Ovary (tissue), 10 donors: ENCODE measurements at regions of chr16 and their contacts with region 1.

Region 1: GRCh38 chr16:27703545-27703944 is 153.6 kb downstream of the KATNIP start:
- DNase-seq: peak in 1 of 5 donors; percentile 1
- H3K4me3 ChIP-seq: no peak overlapping the region
- H3K27ac ChIP-seq: no peak overlapping the region
- H3K4me1 ChIP-seq: no peaks in the 10 kb centered on the region
- H3K27me3 ChIP-seq: no peaks in the 10 kb centered on the region
- CTCF ChIP-seq: no peak
- EP300 ChIP-seq: no peak
- POLR2A ChIP-seq: no peak

Region 2: DNA sequence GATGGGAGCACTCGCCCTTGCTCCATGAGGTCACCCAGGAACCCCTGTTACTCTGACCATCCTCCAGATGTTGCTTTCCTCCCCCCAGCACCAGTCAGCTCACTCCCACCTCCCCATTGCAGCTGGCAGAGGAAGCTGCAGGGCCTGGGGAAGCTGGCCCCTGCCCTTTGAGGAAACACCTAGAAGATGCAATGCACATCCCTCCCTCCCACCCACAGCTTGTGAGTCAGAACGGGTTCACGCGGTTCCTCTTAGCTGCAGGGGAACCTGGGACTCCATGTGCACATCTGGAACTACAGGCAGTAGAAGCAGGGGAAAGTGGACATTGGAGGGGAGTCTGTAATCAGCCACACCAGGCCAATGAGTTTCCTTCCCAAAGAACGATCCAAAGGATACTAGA is 56.7 kb before region 1 on chr16:
- intact Hi-C with region 1: no loop called
- DNase-seq: no peak
- H3K4me3 ChIP-seq: no peak overlapping the region
- H3K27ac ChIP-seq: no peak overlapping the region
- H3K4me1 ChIP-seq: peaks cover 2% of the 10 kb centered on the region
- H3K27me3 ChIP-seq: no peaks in the 10 kb centered on the region
- CTCF ChIP-seq: no peak
- EP300 ChIP-seq: no peak
- POLR2A ChIP-seq: no peak

Region 3: GRCh38 chr16:27769561-27770255 is 66.2 kb after region 1 on chr16:
- intact Hi-C with region 1: loop called in 1 of 4 experiments (anchors 10 kb)
- DNase-seq: no peak
- H3K4me3 ChIP-seq: no peak overlapping the region
- H3K27ac ChIP-seq: no peak overlapping the region
- H3K4me1 ChIP-seq: no peaks in the 10 kb centered on the region
- H3K27me3 ChIP-seq: no peaks in the 10 kb centered on the region
- CTCF ChIP-seq: no peak
- EP300 ChIP-seq: no peak
- POLR2A ChIP-seq: no peak

Region 4: DNA sequence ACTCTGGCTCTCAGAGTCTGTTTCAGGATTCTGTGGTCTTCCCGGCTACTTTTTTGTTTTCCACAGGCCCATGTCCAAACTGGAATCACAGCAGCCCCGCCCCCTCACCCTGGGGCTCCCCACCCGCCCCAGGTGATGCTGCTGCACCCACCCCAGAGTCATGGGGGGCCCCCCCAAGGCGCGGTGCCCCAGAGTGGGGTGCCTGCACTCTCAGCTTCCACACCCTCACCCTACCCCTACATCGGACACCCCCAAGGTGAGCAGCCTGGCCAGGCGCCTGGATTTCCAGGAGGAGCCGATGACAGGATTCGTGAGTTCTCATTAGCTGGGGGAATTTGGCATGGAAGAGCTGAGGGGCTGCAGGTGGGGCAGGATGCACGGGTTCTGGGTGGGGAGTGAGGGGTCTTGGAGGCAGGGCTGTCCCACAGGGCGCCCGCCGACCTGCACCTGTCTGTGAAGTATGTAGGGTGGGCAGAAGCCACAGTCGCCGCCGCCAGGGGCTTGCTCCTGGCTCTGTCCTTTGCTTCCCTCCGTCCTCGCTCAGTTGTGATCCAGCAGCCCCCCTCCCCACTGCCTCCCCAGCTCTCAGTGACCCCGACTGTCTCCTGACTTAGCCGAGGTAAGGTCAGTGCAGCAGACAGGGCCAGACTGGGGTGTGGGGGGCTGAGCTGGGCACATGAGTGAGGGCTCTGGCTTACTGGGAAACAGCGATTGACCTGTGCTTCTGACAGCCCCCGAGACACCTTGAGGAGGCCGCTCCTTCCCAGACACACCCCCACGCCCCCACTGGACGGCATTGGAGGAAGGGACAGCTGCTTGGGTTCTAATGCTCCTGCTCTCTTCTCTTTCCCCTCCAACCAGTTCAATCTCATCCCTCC is 1132.6 kb after region 1 on chr16:
- intact Hi-C with region 1: no loop called
- DNase-seq: no peak
- H3K4me3 ChIP-seq: no peak overlapping the region
- H3K27ac ChIP-seq: no peak overlapping the region
- H3K4me1 ChIP-seq: no peaks in the 10 kb centered on the region
- H3K27me3 ChIP-seq: no peaks in the 10 kb centered on the region
- CTCF ChIP-seq: no peak
- EP300 ChIP-seq: no peak
- POLR2A ChIP-seq: no peak